ENCODE measurements at regions of chr15 and their contacts with region 1.

Region 1: GRCh38 chr15:38690689-38691332 is 126.2 kb upstream of the RASGRP1 start:
- DNase-seq: peak; percentile 91
- H3K4me3 Mint-ChIP-seq: no peak overlapping the region
- H3K27ac Mint-ChIP-seq: no peak overlapping the region
- H3K4me1 Mint-ChIP-seq: peaks cover 63% of the 10 kb centered on the region
- H3K27me3 Mint-ChIP-seq: no peaks in the 10 kb centered on the region

Region 2: GRCh38 chr15:37995461-37996347 is 695.1 kb before region 1 on chr15:
- CTCF ChIA-PET with region 1: no interaction called
- intact Hi-C with region 1: loop called (anchors 5 kb)
- DNase-seq: peak; percentile 16
- H3K4me3 Mint-ChIP-seq: no peak overlapping the region
- H3K27ac Mint-ChIP-seq: no peak overlapping the region
- H3K4me1 Mint-ChIP-seq: no peaks in the 10 kb centered on the region
- H3K27me3 Mint-ChIP-seq: peaks cover 4% of the 10 kb centered on the region

Region 3: DNA sequence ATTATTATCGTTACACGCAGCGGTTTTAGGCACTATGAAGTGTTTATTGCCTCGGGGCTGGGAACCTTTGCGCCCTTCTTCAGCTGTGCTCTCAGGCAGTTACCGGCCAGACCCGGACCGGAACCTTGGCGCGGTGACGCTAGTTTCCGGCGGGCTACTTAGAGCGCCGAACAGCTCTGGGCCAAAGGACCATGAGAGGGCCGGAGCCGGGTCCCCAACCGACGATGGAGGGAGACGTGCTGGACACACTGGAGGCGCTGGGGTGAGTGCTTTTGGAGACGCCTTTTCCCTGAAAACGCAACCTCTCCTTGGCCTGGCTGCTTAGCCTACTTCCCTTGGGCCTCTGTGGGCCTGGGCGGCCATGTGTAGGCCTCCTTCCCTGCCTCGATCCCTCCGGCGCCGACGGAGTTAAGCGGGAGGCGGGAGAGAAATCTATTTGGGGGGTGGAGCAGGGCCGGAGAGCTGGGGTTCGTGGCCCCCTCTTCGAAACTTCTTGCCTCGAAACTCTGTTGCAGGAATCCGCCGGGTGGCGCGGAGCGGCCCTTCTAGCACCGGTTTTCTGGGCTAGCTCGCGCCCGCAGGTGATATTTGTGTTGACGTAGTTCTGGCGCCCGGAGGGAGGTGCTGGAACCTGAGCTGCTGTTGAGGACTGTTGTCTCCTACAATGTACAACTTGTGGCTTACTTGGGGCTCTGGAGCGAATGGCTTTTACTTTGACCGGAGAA is 236.7 kb before region 1 on chr15 and contains the start of gene FAM98B:
- CTCF ChIA-PET with region 1: interaction called, 21 read pairs
- intact Hi-C with region 1: loop called (anchors 1 kb)
- DNase-seq: peak; percentile 92
- H3K4me3 Mint-ChIP-seq: peak within 1 kb of the TSS; percentile 94
- H3K27ac Mint-ChIP-seq: peak within 1 kb of the TSS; percentile 88
- H3K4me1 Mint-ChIP-seq: peaks cover 28% of the 10 kb centered on the region
- H3K27me3 Mint-ChIP-seq: no peaks in the 10 kb centered on the region
- total RNA-seq, gene FAM98B: 42.0 to 47.4 TPM

Region 4: DNA sequence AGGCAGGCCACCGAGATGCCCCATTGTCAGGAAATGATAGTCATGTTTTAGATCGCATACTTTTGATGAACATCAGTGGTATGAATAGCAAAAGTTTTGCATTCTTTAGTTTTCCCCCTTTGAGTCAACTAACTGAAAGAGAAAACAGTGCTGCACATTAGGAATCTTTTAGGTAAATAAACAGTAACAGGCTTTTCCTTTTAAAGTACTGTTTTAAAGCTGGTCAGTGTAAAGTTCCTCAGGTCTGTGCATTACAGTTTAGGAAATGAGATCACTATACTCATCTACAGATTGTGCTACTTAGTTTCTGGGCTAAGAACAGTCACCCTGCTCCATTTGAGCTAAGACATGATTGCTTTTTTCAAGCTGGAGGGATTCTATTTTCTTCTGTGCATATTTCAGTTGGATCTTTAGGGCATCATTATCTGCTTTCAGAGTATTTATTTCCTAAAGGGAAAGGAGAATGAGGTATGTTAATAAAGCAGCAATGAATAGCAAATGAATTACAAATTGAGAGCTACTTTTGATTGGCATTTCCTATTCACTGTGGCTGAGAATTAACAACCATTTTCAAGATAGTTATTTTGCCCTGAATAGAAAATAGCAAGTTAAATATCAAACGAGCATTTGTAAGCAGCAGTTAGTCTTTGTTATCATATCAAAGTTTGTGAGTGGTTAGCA is 200.4 kb before region 1 on chr15:
- CTCF ChIA-PET with region 1: interaction called, 18 read pairs
- intact Hi-C with region 1: loop called (anchors 1 kb)
- DNase-seq: no peak
- H3K4me3 Mint-ChIP-seq: no peak overlapping the region
- H3K27ac Mint-ChIP-seq: peak overlapping the region; percentile 30
- H3K4me1 Mint-ChIP-seq: peaks cover 46% of the 10 kb centered on the region
- H3K27me3 Mint-ChIP-seq: no peaks in the 10 kb centered on the region

Region 5: GRCh38 chr15:38521316-38521715 is 169.5 kb before region 1 on chr15:
- CTCF ChIA-PET with region 1: interaction called, 13 read pairs
- intact Hi-C with region 1: no loop called
- DNase-seq: no peak
- H3K4me3 Mint-ChIP-seq: no peak overlapping the region
- H3K27ac Mint-ChIP-seq: peak overlapping the region; percentile 39
- H3K4me1 Mint-ChIP-seq: peaks cover 64% of the 10 kb centered on the region
- H3K27me3 Mint-ChIP-seq: no peaks in the 10 kb centered on the region

Region 6: DNA sequence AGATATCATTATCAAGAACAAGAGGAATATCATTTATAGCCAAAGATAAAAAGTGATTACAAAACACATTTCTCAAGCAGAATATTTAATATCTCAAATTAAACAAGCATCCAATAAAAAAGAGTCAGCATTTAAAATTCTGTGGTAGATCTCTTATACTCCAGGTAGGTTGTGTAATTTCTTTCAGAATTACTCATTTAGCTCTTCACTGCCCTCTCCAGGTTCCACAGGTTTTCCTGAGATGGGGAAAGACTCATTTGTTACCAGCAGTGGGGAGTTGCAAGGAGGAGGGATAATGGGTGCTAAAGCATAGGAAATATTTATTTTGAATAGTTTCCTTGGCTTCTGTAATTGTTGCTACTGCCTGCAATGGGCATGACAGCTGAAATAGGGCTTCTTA is 43.1 kb before region 1 on chr15:
- CTCF ChIA-PET with region 1: interaction called, 33 read pairs
- intact Hi-C with region 1: no loop called
- DNase-seq: no peak
- H3K4me3 Mint-ChIP-seq: no peak overlapping the region
- H3K27ac Mint-ChIP-seq: no peak overlapping the region
- H3K4me1 Mint-ChIP-seq: peaks cover 68% of the 10 kb centered on the region
- H3K27me3 Mint-ChIP-seq: no peaks in the 10 kb centered on the region

Measured in activated naive CD4-positive, alpha-beta T cell treated with anti-CD3 and anti-CD28 coated beads for 36 hours (primary cell).